ENCODE measurements at regions of chr6 and their contacts with region 1.

Region 1: GRCh38 chr6:109125504-109125903 is 30.2 kb downstream of the CEP57L1 start:
- DNase-seq: no peak
- H3K4me3 Mint-ChIP-seq: no peak overlapping the region
- H3K27ac Mint-ChIP-seq: no peak overlapping the region
- H3K4me1 Mint-ChIP-seq: peaks cover 15% of the 10 kb centered on the region
- H3K27me3 Mint-ChIP-seq: no peaks in the 10 kb centered on the region

Region 2: GRCh38 chr6:109164322-109164721 is 38.8 kb after region 1 on chr6:
- intact Hi-C with region 1: loop called (anchors 5 kb)
- DNase-seq: no peak
- H3K4me3 Mint-ChIP-seq: no peak overlapping the region
- H3K27ac Mint-ChIP-seq: no peak overlapping the region
- H3K4me1 Mint-ChIP-seq: no peaks in the 10 kb centered on the region
- H3K27me3 Mint-ChIP-seq: no peaks in the 10 kb centered on the region

Measured in activated T-helper 1 cell treated with anti-CD3 and anti-CD28 coated beads, Interleukin-12 subunit alpha, Interleukin-12 subunit beta, Interleukin-2, Interleukin-4 antibody, amounts not matched to agents 30 ng/mL and 10 ng/mL and 1 ng/mL, durations not matched to agents 14 hours and 24 hours and 36 hours (primary cell).